Body of pancreas (tissue), 4 donors: ENCODE measurements at regions of chr7 and their contacts with region 1.

Region 1: GRCh38 chr7:85023045-85023712 is 163.7 kb downstream of the SEMA3D start:
- DNase-seq: peak; percentile 7 to 39 (median 14)
- ATAC-seq: no peak
- H3K4me3 ChIP-seq: no peak overlapping the region
- H3K27ac ChIP-seq: no peak overlapping the region
- H3K4me1 ChIP-seq: peaks cover 11% of the 10 kb centered on the region
- H3K27me3 ChIP-seq: no peaks in the 10 kb centered on the region
- CTCF ChIP-seq: peak; percentile 41 to 82 (median 61)
- POLR2A ChIP-seq: no peak

Region 2: GRCh38 chr7:83976295-83976694 is 1046.9 kb before region 1 on chr7:
- intact Hi-C with region 1: loop called (anchors 5 kb)
- DNase-seq: no peak
- ATAC-seq: no peak
- H3K4me3 ChIP-seq: no peak overlapping the region
- H3K27ac ChIP-seq: no peak overlapping the region
- H3K4me1 ChIP-seq: no peaks in the 10 kb centered on the region
- H3K27me3 ChIP-seq: no peaks in the 10 kb centered on the region
- CTCF ChIP-seq: peak in 6 of 7 experiments; percentile 41 to 76 (median 68)
- POLR2A ChIP-seq: no peak